Tibial artery (tissue), 4 donors: ENCODE measurements at regions of chr3 and their contacts with region 1.

Region 1: DNA sequence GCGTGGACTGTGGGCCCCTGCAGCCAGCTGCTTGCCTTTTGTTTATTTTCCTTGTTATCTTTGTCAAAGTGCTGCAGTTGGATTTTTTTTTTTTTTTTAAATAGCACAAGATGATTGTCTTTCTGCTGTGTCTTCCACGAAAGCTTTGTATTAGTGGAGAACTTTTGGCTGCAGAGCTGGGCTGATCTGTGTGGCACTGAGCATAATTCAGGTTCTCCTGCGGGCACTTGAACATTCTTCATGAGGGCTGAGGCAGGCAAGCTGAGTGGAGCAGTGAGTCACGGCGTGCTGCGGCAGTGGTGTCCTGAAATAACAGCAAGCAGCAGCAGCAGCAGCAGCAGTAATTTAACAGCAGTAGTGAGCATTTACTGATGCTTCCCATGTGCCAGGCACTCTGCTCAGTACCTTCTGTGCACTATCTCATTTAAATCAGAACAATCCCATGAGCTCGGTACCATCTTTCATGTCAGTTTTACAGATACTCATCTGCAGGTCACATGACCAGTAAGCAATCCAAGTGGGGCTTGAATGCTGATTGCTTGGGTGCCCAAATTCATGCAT is 45.8 kb downstream of the MITF start:
- DNase-seq: peak; percentile 65 to 87
- H3K4me3 ChIP-seq: no peak overlapping the region
- H3K27ac ChIP-seq: peak overlapping the region; percentile 38 to 47
- H3K4me1 ChIP-seq: peaks cover 0 to 46% (median 24%) of the 10 kb centered on the region in 4 donors
- H3K27me3 ChIP-seq: no peaks in the 10 kb centered on the region
- CTCF ChIP-seq: no peak

Region 2: DNA sequence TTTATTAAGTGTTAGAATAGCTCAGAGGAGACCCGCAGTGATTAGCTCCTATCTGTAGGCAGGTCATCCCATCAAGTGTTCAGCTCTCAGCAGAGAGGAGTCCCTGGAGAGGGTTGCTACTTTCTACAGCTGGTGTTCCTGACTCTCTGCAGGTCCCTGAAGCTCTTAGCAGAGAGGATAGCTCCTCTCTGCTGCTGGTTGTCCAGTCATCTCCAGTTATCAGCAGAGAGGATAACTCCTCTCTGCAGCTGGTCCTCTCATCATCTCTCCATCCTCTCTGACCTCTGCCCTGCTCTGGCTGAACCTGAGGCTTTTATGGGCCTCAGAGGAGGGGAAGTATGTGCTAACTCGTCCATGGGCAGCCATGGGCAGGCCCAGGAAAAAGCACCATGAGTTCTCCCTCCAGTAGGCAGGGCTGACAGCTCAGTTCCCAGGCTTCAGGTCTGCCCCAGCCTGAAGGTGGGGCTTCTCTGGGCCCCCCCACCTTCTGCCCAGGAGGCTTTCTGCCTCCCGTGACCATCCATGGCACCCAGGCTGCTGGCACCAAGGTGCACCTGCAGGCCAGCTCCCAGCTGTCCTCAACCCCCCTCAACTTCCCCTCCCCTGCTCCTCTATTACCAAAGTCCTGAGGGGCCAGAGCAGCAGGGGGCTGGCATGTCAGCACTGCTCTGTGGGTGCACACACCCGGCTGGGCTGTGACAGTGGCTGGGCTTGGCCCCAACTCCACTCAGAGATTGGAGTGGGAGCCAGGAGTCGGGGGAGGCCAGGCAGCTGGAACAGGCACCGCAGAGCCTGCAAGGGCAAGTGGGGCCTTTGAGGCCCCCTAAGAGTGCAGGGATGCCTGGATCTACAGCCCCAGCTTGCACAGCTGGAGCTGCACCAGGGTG is 300.3 kb before region 1 on chr3:
- intact Hi-C with region 1: no loop called
- DNase-seq: no peak
- H3K4me3 ChIP-seq: no peak overlapping the region
- H3K27ac ChIP-seq: no peak overlapping the region
- H3K4me1 ChIP-seq: no peaks in the 10 kb centered on the region
- H3K27me3 ChIP-seq: peaks cover 0 to 10% of the 10 kb centered on the region in 2 donors
- CTCF ChIP-seq: no peak

Region 3: DNA sequence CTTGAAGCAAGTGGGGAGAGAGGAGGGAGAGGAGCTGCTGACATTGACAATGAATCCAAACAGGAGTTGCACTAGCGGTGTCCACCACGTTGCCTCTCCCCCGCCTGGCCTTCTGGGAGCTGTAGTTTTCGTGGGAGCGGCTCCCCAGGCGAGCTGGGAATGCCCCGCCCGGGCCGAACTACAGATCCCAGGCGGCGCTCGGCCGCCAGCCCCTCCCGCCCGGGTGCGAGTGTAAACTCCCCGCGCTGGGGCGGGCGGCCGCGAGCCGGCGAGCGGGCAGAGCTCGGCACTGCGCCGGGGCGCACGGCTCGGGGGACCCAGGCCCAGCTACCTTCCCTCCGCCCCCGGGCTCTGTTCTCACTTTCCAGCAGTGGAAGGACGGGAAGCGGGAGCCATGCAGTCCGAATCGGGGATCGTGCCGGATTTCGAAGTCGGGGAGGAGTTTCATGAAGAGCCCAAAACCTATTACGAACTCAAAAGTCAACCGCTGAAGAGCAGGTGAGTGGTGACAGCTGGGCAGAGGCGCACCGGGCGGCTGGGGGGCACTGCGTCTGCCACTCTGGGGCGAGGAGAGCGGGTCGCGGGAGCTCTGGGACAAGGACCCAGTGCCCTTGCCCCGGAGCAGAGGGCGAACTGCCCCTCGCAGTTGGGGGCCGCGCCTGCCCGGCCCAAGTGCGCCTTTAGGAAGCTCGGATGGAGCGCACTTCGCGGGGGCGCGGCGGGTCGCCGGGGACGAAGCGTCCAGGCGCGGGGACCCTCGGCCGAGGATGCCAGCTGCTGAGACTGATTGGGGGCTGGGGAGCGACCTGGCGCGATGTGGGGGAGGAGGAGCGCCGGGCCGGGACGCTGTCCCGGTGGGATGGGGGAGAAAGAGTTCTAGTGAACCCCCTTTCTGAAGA is 45.6 kb before region 1 on chr3 and contains the start of gene MITF:
- intact Hi-C with region 1: loop called (anchors 5 kb)
- DNase-seq: peak; percentile 96
- H3K4me3 ChIP-seq: peak within 1 kb of the TSS; percentile 83 to 89
- H3K27ac ChIP-seq: peak within 1 kb of the TSS; percentile 86 to 88
- H3K4me1 ChIP-seq: peaks cover 0 to 38% (median 6%) of the 10 kb centered on the region in 4 donors
- H3K27me3 ChIP-seq: no peaks in the 10 kb centered on the region
- CTCF ChIP-seq: no peak

Region 4: GRCh38 chr3:69751074-69751476 is 34.0 kb before region 1 on chr3:
- intact Hi-C with region 1: no loop called
- DNase-seq: no peak
- H3K4me3 ChIP-seq: no peak overlapping the region
- H3K27ac ChIP-seq: peak overlapping the region; percentile 34 to 49
- H3K4me1 ChIP-seq: peaks cover 0 to 58% (median 27%) of the 10 kb centered on the region in 4 donors
- H3K27me3 ChIP-seq: no peaks in the 10 kb centered on the region
- CTCF ChIP-seq: no peak